H1 (cell line): ENCODE measurements at regions of chr19 and their contacts with region 1.

Region 1: DNA sequence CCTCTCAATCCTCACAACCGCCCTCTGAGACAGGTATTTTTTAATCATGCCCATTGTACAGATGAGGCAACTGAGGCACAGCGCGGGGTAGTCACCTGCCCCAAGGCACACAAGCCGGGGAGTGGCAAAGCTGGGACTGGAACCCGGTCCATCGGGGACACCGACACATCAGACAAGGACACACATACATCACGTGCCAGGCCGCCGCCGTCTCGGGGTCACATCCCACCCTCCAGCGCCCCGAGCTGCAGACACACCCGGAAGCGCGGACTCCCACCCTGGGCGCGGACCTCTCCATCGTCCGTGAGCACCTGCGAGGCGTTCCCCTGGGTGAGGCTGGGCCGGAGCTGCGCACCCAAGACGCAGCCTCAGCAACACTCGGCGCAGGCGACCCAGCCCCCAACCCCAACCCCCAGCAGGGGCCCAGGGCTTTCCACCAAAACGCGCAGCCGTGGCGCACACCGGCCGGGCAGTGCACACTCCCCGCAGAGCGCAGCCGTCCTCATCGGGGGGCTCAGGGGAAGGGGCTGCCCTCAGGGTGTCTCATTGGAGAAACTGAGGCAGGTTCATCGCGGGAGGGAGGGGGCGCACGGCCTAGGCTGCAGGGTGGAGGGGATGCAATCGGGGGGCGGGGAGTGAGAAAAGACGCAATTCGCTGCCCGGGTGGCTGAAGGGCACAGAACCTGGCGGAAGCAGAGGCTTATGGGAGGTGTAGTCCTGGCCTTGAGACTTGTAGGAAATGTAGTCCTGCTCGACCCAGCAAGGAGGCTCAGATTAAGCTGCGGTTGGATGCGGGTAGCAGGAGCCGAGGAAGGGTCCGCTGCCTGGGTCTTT is 1.9 kb upstream of the LMTK3 start:
- DNase-seq: peak in 1 of 2 experiments; percentile 87
- H3K4me3 ChIP-seq: peak overlapping the region; percentile 51 to 81 (median 69)
- H3K27ac ChIP-seq: no peak overlapping the region
- H3K4me1 ChIP-seq: peaks cover 0 to 23% (median 12%) of the 10 kb centered on the region in 4 experiments; a peak in 5 of 7 replicates
- H3K27me3 ChIP-seq: peaks cover 0 to 12% (median 9%) of the 10 kb centered on the region in 4 experiments; a peak in 4 of 7 replicates
- CTCF ChIP-seq: peak in 1 of 3 experiments; percentile 1; a peak in 1 of 4 replicates
- EP300 ChIP-seq: no peak
- POLR2A ChIP-seq: no peak; a peak in 1 of 3 replicates
- RAD21 ChIP-seq: no peak

Region 2: GRCh38 chr19:48501496-48502350 is 11.8 kb before region 1 on chr19:
- CTCF ChIA-PET with region 1: interaction called, 29 read pairs
- POLR2A ChIA-PET with region 1: interaction called, 6 read pairs
- DNase-seq: peak; percentile 96 to 100
- H3K4me3 ChIP-seq: peak overlapping the region; percentile 19 to 60 (median 44); a peak in 7 of 8 replicates
- H3K27ac ChIP-seq: peak overlapping the region; percentile 58; the same call in 1 of the 2 replicates
- H3K4me1 ChIP-seq: peaks cover 0 to 14% (median 12%) of the 10 kb centered on the region in 4 experiments; a peak in 6 of 7 replicates
- H3K27me3 ChIP-seq: no peaks in the 10 kb centered on the region
- CTCF ChIP-seq: no peak
- EP300 ChIP-seq: 0 out of 3 replicates have a peak, but pooled peaks of 1 of the 2 experiments have one; percentile 7
- POLR2A ChIP-seq: no peak
- RAD21 ChIP-seq: no peak

Region 3: GRCh38 chr19:48553676-48554386 is 40.3 kb after region 1 on chr19:
- CTCF ChIA-PET with region 1: interaction called, 132 read pairs
- POLR2A ChIA-PET with region 1: interaction called, 7 read pairs
- DNase-seq: no peak
- H3K4me3 ChIP-seq: peak overlapping the region in 2 of 4 experiments; percentile 5 to 44; a peak in 3 of 8 replicates
- H3K27ac ChIP-seq: peak overlapping the region; percentile 41; the same call in 1 of the 2 replicates
- H3K4me1 ChIP-seq: peaks cover 0 to 24% (median 12%) of the 10 kb centered on the region in 4 experiments; a peak in 6 of 7 replicates
- H3K27me3 ChIP-seq: no peaks in the 10 kb centered on the region; a peak in 1 of 7 replicates
- CTCF ChIP-seq: 0 out of 4 replicates have a peak, but pooled peaks of 1 of the 3 experiments have one; percentile 9
- EP300 ChIP-seq: no peak
- POLR2A ChIP-seq: no peak
- RAD21 ChIP-seq: no peak

Region 4: DNA sequence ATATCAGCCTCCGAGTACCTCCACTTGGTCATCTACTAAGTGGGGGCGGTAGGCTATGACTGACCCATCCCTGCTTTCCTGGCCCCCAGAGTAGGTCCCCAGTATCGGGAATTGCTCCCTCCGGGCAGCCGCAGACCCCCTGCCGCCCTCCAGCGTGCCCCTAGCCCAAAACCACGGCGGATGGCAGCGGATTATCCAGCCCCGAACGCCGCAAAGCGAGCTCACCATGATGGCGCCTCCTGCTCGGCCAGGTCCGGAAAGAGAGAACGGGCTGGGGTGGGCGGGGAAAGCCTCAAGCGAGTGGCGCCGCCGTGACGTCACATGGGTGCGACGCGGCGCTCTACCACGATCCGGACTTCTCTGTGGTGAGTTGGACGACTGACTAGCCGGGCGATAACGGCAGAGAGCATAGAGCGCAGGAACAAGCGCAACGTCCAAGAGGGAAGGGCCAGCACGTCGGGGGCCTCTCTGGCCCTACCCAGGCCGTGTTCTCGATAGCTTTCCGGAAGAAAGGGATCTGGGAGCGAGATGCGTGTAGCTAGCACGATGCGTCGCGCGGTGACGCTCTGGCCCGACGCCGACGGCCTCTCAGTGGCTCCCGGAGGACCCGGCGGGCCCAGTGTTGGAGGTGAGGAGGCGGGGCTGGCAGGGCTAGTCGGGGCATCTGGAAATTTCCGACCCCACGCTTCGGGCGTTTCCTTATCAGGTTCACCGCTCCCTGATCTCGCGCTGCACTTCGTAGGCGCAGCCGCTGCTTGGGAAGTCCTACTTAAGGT is 105.6 kb after region 1 on chr19 and contains the starts of genes RPL18 and SPHK2:
- CTCF ChIA-PET with region 1: no interaction called
- POLR2A ChIA-PET with region 1: interaction called, 59 read pairs
- DNase-seq: peak; percentile 97 to 98
- H3K4me3 ChIP-seq: peak within 1 kb of the TSS; percentile 83 to 97 (median 94)
- H3K27ac ChIP-seq: peak within 1 kb of the TSS; percentile 87
- H3K4me1 ChIP-seq: peaks cover 3 to 40% (median 32%) of the 10 kb centered on the region in 4 experiments
- H3K27me3 ChIP-seq: no peaks in the 10 kb centered on the region
- CTCF ChIP-seq: peak in 1 of 3 experiments; percentile 9; a peak in 1 of 4 replicates
- EP300 ChIP-seq: no peak; a peak in 1 of 3 replicates
- POLR2A ChIP-seq: peak; percentile 95 to 99
- RAD21 ChIP-seq: no peak
- total RNA-seq, gene RPL18: 1,669 and 1,693 TPM in 2 replicates
- total RNA-seq, gene SPHK2: 60.9 and 61.6 TPM in 2 replicates